Ascending aorta (tissue), 2 donors: ENCODE measurements at regions of chr6 and their contacts with region 1.

Region 1: DNA sequence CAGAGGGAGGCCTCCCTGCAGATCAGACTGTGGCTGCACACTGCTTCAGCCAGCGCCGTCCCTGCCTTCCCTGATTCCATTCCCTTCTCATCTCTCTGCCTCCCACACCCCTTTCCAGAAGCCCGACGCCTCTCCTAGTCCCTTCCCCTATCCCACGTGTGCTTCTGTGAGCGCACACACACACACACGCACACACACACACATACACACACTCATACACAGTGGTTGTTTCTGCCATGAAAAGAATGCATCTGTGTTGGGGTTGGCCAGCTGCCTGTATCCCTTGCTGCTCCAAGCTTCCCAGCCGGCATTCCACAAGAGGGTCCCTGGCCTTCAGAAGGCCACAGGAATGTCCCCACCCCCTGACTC is 51.7 kb downstream of the MOCS1 start:
- DNase-seq: peak in 1 of 2 donors; percentile 90
- H3K4me3 ChIP-seq: peak overlapping the region; percentile 22 to 23
- H3K27ac ChIP-seq: peak overlapping the region; percentile 90 to 95
- H3K4me1 ChIP-seq: peaks cover 34 to 69% of the 10 kb centered on the region in 2 donors
- H3K27me3 ChIP-seq: no peaks in the 10 kb centered on the region
- CTCF ChIP-seq: no peak

Region 2: GRCh38 chr6:39929738-39930461 is 47.4 kb after region 1 on chr6:
- intact Hi-C with region 1: loop called (anchors 2 kb)
- DNase-seq: no peak
- H3K4me3 ChIP-seq: peak overlapping the region in 1 of 2 donors; percentile 13
- H3K27ac ChIP-seq: peak overlapping the region; percentile 84 to 93
- H3K4me1 ChIP-seq: peaks cover 12 to 58% of the 10 kb centered on the region in 2 donors
- H3K27me3 ChIP-seq: no peaks in the 10 kb centered on the region
- CTCF ChIP-seq: no peak